BJ (cell line): ENCODE measurements at regions of chr19 and their contacts with region 1.

Region 1: DNA sequence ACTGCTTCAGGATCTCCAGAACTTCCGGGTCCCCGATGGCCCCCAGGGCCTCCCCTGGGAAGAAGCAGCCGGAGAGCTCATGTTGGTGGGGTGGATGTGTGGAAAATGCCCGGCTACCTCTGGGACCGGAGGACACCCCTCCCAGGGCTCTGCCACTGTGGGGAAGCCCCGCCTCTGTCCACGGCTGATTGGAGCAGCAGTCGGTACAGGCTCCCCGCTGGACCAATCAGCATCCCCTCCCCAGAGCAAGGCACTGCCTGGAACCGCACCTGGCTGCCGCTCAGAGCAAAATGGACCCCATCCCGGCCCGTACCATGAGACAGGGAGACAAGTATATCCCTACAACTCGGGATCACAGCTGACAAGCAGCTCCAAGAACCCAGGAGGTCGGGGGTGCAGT is 6.4 kb downstream of the DOHH start:
- DNase-seq: no peak
- H3K4me3 ChIP-seq: no peak overlapping the region
- H3K27me3 ChIP-seq: no peaks in the 10 kb centered on the region
- CTCF ChIP-seq: no peak

Region 2: GRCh38 chr19:3304871-3305423 is 189.1 kb before region 1 on chr19:
- CTCF ChIA-PET with region 1: interaction called, 11 read pairs
- POLR2A ChIA-PET with region 1: no interaction called
- DNase-seq: no peak
- H3K4me3 ChIP-seq: no peak overlapping the region
- H3K27me3 ChIP-seq: peaks cover 6% of the 10 kb centered on the region
- CTCF ChIP-seq: peak; percentile 87

Region 3: DNA sequence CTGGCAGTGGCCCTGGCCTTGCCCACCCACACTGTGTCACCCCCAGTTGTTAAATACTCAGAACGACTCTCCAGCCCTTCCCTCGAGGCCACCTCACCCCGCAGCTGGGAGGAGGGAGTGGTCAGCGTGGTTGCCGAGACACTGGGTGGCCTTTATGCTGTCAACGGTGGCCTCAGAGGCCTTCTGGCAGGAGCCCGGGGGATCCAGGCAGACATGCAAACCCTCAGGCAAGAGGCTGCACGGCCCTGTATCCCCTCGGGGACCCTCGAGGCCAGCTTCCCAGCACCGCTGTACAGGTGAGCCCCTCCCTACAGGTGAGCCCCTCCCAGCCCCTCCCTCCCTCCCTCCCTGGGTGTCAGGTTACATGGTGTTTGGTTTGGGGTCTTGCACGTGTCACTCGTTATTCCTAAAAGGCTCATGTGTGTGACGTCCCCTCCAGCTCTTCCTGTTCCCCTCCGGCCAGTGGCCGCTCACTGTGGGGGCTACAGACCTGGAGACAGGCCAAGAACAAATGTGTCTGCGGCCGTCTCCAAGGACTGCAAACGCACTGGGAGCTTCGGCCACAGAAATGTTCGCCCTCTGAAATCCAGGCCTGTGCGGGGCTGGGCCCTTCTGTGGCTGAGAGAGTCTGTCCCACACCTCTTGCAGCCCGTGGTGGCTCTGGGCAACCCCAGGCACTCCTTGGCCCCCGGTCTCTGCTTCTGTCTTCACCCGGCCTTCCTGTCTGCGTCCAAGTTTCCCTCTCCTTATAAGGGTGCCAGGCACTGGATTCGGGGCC is 45.1 kb after region 1 on chr19 and contains the start of gene TEKTIP1:
- CTCF ChIA-PET with region 1: no interaction called
- POLR2A ChIA-PET with region 1: no interaction called
- DNase-seq: no peak
- H3K4me3 ChIP-seq: no peak within 1 kb of the TSS
- H3K27me3 ChIP-seq: no peaks in the 10 kb centered on the region
- CTCF ChIP-seq: no peak
- polyA plus RNA-seq, gene TEKTIP1: not detected in 2 replicates